Breast epithelium (tissue), 4 donors: ENCODE measurements at regions of chr2 and their contacts with region 1.

Region 1: DNA sequence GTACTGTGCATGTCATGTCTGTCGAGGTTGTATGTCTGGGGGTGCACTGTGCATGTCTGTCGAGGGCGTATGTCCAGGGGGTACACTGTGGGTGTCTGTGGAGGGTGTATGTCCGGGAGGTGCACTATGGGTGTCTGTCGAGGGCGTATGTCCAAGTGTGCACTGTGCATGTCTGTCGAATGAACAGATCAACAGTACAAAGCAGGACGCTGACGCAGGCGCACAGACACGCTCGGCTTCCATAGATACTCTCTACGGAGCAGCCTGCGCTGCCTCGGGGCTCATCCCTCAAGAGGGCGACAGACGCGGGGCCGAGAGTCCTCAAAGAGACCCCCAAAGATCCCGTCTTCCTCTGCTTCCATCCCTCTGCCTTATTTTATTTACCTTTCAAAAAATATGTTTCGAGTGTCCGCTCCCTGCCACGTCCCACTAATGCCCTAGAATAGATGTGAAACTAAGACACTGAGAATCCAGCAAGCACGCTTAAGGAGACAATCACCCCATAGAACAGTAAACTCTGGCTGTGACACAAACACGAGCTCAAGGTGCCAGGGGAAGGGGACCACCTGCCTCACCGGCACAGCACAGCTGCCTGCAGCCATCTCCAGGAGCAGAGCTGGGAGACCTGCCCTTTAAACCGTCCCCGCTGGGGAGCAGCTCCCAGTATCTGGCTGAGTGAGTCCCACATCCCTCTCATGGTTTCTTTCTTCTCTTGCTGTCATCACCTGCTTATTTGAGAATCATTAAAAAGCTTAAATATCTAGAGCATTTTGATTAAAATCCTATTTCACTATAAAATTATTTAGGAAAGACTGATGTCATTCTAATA is 250.5 kb upstream of the MYT1L start:
- DNase-seq: no peak
- H3K4me3 ChIP-seq: no peak overlapping the region
- H3K27ac ChIP-seq: no peak overlapping the region
- H3K4me1 ChIP-seq: no peaks in the 10 kb centered on the region
- H3K27me3 ChIP-seq: peaks cover 0 to 19% of the 10 kb centered on the region in 2 donors
- CTCF ChIP-seq: no peak
- POLR2A ChIP-seq: no peak

Region 2: GRCh38 chr2:1400943-1401735 is 1180.4 kb before region 1 on chr2:
- intact Hi-C with region 1: no loop called
- DNase-seq: no peak
- H3K4me3 ChIP-seq: no peak overlapping the region
- H3K27ac ChIP-seq: no peak overlapping the region
- H3K4me1 ChIP-seq: no peaks in the 10 kb centered on the region
- H3K27me3 ChIP-seq: no peaks in the 10 kb centered on the region
- CTCF ChIP-seq: no peak
- POLR2A ChIP-seq: no peak

Region 3: DNA sequence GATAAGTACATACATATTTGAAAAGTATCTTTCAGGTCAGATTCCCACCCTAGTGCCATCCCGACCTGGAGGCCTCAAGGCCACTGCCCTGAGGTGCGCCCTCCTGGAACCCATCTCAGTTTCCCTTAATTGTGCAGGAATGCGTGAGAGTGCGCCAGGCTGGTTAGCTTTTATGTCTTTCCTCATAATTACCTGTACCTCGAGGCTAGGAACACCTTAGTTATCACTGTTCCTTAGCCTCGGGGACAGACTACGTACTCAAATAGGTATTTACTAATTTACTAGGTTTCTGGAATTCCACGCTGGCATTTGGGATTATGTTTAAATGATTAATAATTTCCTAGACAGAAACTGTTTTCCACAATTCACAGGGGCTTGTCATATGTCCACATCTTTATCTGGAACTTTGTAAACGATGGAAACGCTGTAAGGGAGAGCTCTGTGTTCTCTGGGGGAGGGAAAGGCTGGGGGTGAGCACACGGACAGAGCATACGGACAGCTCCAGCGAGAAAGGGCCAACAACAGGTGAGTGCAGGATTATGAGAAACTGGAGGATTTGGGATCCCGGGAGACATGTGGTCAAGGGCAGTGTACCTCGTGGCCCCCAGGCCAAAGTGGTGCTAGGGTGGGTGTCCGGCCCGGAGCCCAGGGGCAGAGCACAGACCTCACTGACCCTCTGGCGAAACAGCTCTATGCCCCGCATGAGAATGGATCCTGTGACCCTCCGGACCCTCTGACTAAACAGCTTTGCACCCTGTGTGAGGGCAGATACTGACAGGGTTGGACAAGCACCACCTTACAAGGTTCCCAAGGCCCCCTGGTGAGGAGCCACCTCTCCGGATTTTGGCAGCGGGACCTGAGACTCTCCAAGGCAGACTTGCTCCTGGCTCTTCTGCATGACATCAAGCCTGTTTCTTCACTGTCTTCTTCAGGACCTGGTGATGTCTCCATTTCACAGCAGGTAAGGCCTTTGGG is 735.2 kb before region 1 on chr2:
- intact Hi-C with region 1: loop called (anchors 5 kb)
- DNase-seq: no peak
- H3K4me3 ChIP-seq: no peak overlapping the region
- H3K27ac ChIP-seq: no peak overlapping the region
- H3K4me1 ChIP-seq: no peaks in the 10 kb centered on the region
- H3K27me3 ChIP-seq: peaks cover 0 to 19% of the 10 kb centered on the region in 2 donors
- CTCF ChIP-seq: no peak
- POLR2A ChIP-seq: no peak

Region 4: DNA sequence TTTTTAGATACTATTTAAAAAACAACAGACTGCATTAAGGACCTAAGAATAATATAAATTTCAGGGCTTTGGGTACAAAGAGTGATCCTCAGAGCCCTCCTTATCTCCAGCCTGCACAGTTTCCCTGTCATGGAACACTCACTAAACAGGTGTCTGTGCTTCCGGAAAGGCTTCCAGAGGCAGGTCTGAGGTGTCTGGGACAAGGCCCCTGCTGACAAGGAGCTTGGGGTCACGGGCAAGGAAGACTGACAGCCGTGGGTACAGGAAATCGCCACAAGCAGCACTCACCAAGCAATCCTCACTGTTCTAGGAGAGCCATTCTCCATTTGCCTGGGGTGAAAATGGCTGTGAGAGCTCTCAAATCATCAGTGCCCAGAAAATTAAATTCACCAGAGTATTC is 616.9 kb before region 1 on chr2:
- intact Hi-C with region 1: loop called (anchors 5 kb)
- DNase-seq: no peak
- H3K4me3 ChIP-seq: no peak overlapping the region
- H3K27ac ChIP-seq: no peak overlapping the region
- H3K4me1 ChIP-seq: no peaks in the 10 kb centered on the region
- H3K27me3 ChIP-seq: peaks cover 0 to 5% of the 10 kb centered on the region in 2 donors
- CTCF ChIP-seq: no peak
- POLR2A ChIP-seq: no peak

Region 5: DNA sequence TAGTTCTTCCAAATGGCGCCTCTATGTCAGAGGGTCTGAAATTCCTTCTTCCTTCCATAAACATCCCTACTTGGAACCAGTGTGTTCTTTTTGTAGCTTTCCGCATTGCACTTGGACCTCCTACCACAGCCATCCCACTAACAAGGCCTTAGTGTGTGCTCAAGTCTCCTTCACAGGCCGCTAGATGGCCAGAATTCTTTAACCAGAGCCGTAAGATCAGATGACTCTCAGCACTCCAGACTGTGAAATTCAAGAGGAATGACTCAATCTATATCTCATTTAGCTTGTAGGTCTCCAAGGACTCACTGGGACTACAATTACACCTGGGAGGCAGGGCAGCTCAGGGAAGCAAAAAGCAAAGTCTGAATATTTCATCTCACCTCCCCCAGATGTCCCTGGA is 497.1 kb after region 1 on chr2:
- intact Hi-C with region 1: no loop called
- DNase-seq: no peak
- H3K4me3 ChIP-seq: no peak overlapping the region
- H3K27ac ChIP-seq: no peak overlapping the region
- H3K4me1 ChIP-seq: no peaks in the 10 kb centered on the region
- H3K27me3 ChIP-seq: no peaks in the 10 kb centered on the region
- CTCF ChIP-seq: no peak
- POLR2A ChIP-seq: no peak